GM18951 (cell line): ENCODE measurements at regions of chr9 and their contacts with region 1.

Region 1: DNA sequence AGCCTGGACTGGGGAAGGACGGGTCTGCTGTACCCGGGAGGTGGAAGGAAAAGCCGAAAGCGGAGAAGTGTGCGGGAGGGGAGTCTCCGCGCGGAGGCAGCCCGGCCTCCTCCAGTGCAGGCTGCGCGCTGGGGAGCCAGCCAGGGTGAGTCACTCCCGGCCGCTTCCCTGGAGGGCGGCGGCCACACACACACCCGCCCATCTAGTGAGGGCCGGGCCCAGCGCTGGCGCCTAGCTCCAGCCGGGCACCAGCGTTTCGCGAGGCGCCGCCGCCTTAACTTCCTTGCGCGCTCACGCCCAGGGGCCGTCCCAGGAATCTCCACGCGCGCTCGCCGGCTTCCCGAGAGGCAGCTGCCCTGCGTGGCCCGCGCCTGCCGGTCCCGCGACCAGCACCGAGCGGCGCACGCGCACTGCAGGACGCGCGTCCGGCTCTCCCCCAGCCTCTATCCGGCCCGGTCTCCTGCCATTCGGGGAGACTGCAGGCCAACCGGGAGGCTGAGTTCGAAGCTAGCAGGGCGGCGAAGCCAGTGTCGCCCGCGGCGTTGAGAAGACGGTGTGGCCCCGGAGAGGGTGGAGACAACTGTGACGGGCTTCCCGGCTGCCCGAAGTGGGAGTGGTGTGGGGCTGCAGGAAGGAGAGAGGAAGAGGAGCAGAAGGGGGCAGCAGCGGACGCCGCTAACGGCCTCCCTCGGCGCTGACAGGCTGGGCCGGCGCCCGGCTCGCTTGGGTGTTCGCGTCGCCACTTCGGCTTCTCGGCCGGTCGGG is at the start of gene JAK2:
- POLR2A ChIP-seq: peak; percentile 88

Region 2: DNA sequence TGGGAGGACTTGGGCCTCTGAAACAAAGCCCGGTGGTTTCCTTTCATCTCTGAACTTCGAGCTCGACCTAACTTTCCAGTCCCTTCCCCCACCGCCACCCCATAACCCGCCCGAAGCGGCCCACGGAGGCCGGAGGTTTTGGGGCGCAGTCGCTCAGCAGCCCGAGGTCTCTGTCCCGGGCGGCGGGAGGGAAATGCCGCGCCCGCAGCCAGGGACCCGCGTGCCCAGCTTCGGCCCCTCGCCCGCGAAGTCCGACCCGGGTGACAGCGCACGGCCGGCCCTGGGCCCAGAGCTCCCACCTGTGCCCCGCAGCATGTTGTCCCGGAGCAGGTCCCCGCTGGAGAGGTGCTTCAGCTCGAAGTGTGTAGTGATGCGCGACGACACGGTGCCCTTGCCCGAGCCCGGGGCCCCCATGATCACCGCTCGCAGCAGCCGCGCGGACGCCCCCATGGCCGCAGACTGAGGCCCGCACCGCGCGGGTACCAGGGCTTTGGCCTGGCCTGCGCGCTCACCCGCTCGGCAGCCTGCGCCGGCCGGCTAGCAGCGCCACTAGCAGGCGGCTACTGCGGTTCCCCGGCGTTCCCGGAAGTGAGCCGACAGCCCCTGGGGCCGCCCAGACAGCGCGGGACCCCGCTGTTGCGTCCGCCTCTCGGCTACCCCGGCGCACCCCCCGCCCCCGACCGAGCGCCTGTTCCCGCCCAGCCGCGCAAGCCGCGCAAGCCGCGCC is 244.0 kb before region 1 on chr9 and contains the start of gene AK3:
- in situ Hi-C with region 1: loop called (anchors 10 kb)
- POLR2A ChIP-seq: peak; percentile 95